Common myeloid progenitor, CD34-positive (primary cell): ENCODE measurements at regions of chr1 and their contacts with region 1.

Region 1: GRCh38 chr1:25771246-25772114 is 28.5 kb upstream of the SELENON start:
- DNase-seq: peak; percentile 65 to 94 (median 92)
- H3K4me3 ChIP-seq: peak overlapping the region in 3 of 7 experiments; percentile 32 to 51 (median 51)
- H3K27ac ChIP-seq: no peak overlapping the region
- H3K4me1 ChIP-seq: peaks cover 8 to 78% (median 61%) of the 10 kb centered on the region in 4 experiments
- H3K27me3 ChIP-seq: no peaks in the 10 kb centered on the region

Region 2: GRCh38 chr1:25754470-25755181 is 16.9 kb before region 1 on chr1:
- CTCF ChIA-PET with region 1: interaction called, 19 read pairs
- POLR2A ChIA-PET with region 1: interaction called, 3 read pairs
- DNase-seq: peak in 2 of 3 donors; percentile 72 to 73
- H3K4me3 ChIP-seq: peak overlapping the region in 1 of 7 experiments; percentile 4
- H3K27ac ChIP-seq: no peak overlapping the region
- H3K4me1 ChIP-seq: peaks cover 3 to 43% (median 40%) of the 10 kb centered on the region in 4 experiments
- H3K27me3 ChIP-seq: no peaks in the 10 kb centered on the region